ENCODE measurements at regions of chr3 and their contacts with region 1.

Region 1: GRCh38 chr3:71064288-71064955 is 519.1 kb downstream of the FOXP1 start:
- DNase-seq: peak; percentile 44
- H3K4me3 Mint-ChIP-seq: no peak overlapping the region
- H3K27ac Mint-ChIP-seq: no peak overlapping the region
- H3K4me1 Mint-ChIP-seq: peaks cover 37% of the 10 kb centered on the region
- H3K27me3 Mint-ChIP-seq: no peaks in the 10 kb centered on the region
- CTCF ChIP-seq: no peak

Region 2: DNA sequence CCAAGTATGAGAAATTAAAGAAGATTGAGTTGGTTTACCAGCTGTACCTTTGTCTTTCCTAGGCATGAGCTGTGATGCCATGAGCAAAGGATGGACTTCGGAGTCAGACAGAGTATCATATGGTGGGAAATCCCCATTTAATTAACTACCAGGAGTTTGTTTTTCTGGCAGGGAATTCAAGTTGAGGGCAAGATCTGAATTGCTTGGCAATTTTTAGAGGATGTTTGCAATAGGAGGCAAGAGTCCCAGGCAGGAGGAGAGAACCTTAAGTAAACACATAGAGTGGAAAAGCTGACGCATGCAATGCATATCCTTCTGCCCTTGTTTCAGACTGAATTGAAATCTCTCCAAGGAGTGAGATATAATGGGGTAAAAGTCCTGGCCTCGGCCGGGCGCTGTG is 182.3 kb before region 1 on chr3:
- CTCF ChIA-PET with region 1: no interaction called
- POLR2A ChIA-PET with region 1: no interaction called
- intact Hi-C with region 1: no loop called
- DNase-seq: no peak
- H3K4me3 Mint-ChIP-seq: no peak overlapping the region
- H3K27ac Mint-ChIP-seq: no peak overlapping the region
- H3K4me1 Mint-ChIP-seq: no peaks in the 10 kb centered on the region
- H3K27me3 Mint-ChIP-seq: no peaks in the 10 kb centered on the region
- CTCF ChIP-seq: no peak

Region 3: GRCh38 chr3:71050538-71051258 is 13.7 kb before region 1 on chr3:
- CTCF ChIA-PET with region 1: interaction called, 13 read pairs
- POLR2A ChIA-PET with region 1: interaction called, 64 read pairs
- intact Hi-C with region 1: no loop called
- DNase-seq: no peak
- H3K4me3 Mint-ChIP-seq: no peak overlapping the region
- H3K27ac Mint-ChIP-seq: no peak overlapping the region
- H3K4me1 Mint-ChIP-seq: peaks cover 48% of the 10 kb centered on the region
- H3K27me3 Mint-ChIP-seq: no peaks in the 10 kb centered on the region
- CTCF ChIP-seq: no peak

Region 4: DNA sequence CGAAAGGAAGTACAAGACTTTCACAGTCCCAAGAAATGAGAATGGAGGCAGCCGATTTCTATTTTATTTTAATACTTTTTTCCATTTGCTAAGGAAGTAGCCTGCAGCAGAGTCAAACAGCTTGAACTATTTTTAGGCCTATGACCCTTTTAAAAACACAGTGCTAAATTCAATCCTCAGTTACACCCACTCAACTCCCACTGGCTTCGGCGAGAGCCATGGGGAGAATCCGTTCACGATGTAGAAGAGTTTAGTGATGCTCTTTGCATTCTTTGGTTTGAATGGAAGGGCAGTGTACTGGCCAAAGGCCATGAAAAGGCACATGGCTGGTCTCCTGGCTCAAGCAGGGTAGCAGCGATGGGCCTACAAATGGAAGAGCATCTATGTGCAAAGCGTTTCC is 175.6 kb after region 1 on chr3:
- CTCF ChIA-PET with region 1: no interaction called
- POLR2A ChIA-PET with region 1: no interaction called
- intact Hi-C with region 1: no loop called
- DNase-seq: no peak
- H3K4me3 Mint-ChIP-seq: no peak overlapping the region
- H3K27ac Mint-ChIP-seq: no peak overlapping the region
- H3K4me1 Mint-ChIP-seq: no peaks in the 10 kb centered on the region
- H3K27me3 Mint-ChIP-seq: no peaks in the 10 kb centered on the region
- CTCF ChIP-seq: no peak

Region 5: GRCh38 chr3:71305231-71306206 is 241.1 kb after region 1 on chr3:
- CTCF ChIA-PET with region 1: no interaction called
- POLR2A ChIA-PET with region 1: no interaction called
- intact Hi-C with region 1: loop called (anchors 5 kb)
- DNase-seq: no peak
- H3K4me3 Mint-ChIP-seq: peak overlapping the region; percentile 53
- H3K27ac Mint-ChIP-seq: peak overlapping the region; percentile 34
- H3K4me1 Mint-ChIP-seq: peaks cover 13% of the 10 kb centered on the region
- H3K27me3 Mint-ChIP-seq: no peaks in the 10 kb centered on the region
- CTCF ChIP-seq: no peak

Region 6: GRCh38 chr3:71397046-71397445 is 332.6 kb after region 1 on chr3:
- CTCF ChIA-PET with region 1: interaction called, 7 read pairs
- POLR2A ChIA-PET with region 1: interaction called, 4 read pairs
- intact Hi-C with region 1: loop called (anchors 10 kb)
- DNase-seq: peak; percentile 59
- H3K4me3 Mint-ChIP-seq: no peak overlapping the region
- H3K27ac Mint-ChIP-seq: no peak overlapping the region
- H3K4me1 Mint-ChIP-seq: peaks cover 31% of the 10 kb centered on the region
- H3K27me3 Mint-ChIP-seq: no peaks in the 10 kb centered on the region
- CTCF ChIP-seq: peak; percentile 50

Region 7: DNA sequence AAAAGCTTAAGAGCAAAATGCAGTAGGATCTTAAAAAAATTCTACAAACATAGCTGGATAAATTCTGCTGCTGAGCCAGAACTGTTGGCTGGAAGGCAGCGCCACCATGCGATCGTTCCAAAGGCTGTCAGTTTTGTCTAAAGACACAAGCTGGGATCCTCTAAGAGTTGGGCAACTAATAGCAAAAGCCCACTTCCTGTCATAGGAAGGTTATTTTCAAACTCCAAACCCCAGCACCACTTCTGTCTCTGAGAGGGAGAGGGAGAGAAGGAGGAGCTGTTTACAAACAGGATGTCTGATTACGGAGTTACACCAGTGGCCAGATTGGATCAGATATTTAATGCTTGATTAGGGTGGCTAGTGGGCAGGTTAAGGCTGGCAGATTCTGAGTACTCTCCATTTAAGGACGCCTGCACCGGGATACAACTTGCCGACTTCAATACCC is 616.8 kb after region 1 on chr3:
- CTCF ChIA-PET with region 1: interaction called, 3 read pairs
- POLR2A ChIA-PET with region 1: interaction called, 7 read pairs
- intact Hi-C with region 1: loop called (anchors 5 kb)
- DNase-seq: peak; percentile 80
- H3K4me3 Mint-ChIP-seq: peak overlapping the region; percentile 33
- H3K27ac Mint-ChIP-seq: peak overlapping the region; percentile 83
- H3K4me1 Mint-ChIP-seq: peaks cover 34% of the 10 kb centered on the region
- H3K27me3 Mint-ChIP-seq: no peaks in the 10 kb centered on the region
- CTCF ChIP-seq: peak; percentile 62

Measured in MCF 10A (cell line).